ENCODE measurements at regions of chr9 and their contacts with region 1.

Region 1: GRCh38 chr9:35489313-35490154 is at the start of gene RUSC2:
- DNase-seq: peak; percentile 87 to 92 (median 91)
- ATAC-seq: peak; percentile 78 to 90 (median 87)
- H3K4me3 ChIP-seq: peak within 1 kb of the TSS; percentile 53 to 97 (median 86)
- H3K27ac ChIP-seq: peak within 1 kb of the TSS; percentile 87 to 98 (median 96)
- H3K4me1 ChIP-seq: peaks cover 5 to 40% (median 31%) of the 10 kb centered on the region in 12 donors
- H3K27me3 ChIP-seq: no peaks in the 10 kb centered on the region
- CTCF ChIP-seq: peak; percentile 17 to 64 (median 46)
- POLR2A ChIP-seq: peak in 1 of 2 donors; percentile 79
- total RNA-seq, gene RUSC2: 23.0 to 56.1 (median 30.5) TPM

Region 2: DNA sequence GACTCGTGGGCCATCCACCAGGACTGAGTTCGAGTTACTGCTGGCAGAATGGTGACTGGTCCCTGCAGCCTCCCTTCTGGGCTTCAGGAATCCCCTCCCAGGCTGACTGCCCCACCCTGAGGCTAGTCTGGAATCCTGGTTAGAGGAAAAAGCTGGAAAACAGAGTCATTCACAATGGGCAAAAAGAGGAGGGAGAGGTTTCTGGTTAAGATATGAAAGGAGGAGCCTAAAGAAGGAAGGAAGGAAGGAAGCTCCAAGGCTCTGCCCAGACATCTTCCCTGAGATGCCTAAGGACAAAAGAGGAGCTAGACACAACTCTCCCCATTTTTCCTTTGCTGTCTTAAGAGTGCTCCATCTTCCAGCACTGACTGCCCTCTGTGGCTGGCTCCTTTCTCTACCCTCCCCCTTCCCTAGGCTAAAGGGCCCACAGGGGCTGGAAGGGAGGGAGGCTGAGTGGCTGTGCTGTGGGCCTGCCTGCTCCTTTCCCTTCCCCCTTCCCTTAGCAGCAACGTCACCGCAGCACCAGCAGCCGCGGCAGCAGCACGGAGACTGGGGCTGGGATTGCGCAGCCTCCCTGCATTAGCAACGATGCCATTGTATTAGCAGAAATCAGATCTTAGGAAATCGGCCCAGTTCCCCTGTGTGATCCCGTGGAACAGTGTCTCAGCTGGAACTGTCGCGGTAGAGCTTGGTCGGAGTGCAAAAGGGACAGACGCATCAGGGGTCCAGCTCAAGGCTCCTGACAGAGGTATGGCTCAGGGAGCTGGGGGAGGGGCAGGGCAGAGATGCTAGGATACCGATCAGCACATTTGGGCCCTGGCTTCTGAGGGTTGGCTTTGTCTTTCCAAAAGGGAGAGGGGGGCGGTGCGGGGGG is 49.1 kb after region 1 on chr9:
- intact Hi-C with region 1: loop called in 2 of 10 experiments (anchors 1 to 5 kb)
- DNase-seq: peak; percentile 75 to 84 (median 80)
- ATAC-seq: peak; percentile 81 to 90 (median 86)
- H3K4me3 ChIP-seq: peak overlapping the region; percentile 16 to 65 (median 54)
- H3K27ac ChIP-seq: peak overlapping the region; percentile 85 to 94 (median 90)
- H3K4me1 ChIP-seq: peaks cover 7 to 70% (median 59%) of the 10 kb centered on the region in 12 donors
- H3K27me3 ChIP-seq: no peaks in the 10 kb centered on the region
- CTCF ChIP-seq: no peak
- POLR2A ChIP-seq: peak in 1 of 2 donors; percentile 23

Measured in heart left ventricle (tissue), 16 donors.